Esophagus muscularis mucosa (tissue), 4 donors: ENCODE measurements at regions of chr3 and their contacts with region 1.

Region 1: DNA sequence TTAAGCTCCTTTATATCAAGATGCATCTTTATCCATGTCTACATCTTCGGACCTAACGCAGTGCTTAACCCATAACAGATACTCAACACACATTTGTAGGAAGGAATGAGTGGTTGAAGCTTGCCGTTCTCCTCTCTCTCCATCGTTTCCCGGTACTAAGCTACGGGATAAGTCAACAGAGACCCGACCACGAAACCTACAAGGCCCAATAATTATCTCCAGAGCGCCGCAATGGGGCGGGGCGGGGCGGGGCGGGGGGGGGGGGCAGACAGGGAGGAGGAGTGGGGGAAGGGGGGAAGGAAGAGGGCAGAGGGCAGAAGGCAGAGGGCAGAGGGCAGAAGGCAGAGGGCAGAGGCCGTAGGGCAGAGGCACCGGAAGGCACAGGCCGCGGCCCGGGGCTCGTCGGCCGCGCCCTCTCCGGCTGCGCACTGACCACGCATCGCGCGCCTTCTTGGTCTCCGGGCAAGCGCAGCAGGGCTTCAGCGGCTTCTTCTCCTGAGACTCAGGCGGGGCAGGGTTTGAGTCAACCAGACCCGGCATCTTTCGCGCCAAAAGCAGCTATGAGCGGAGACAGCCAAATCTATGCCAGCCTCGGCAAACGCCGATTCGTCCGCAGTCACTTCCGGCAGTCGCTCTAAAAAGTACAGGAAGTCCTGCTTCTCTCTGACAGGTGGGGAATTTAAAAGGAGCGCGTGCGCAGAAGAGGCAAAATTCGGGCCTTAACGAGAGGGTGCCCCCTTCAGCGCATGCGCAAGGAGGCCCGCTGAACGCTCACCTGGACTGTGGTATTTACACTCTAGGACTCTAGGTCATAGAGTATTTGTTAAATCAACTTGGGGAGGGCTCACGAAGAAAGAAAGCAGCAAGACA is at the start of gene COX17:
- DNase-seq: peak; percentile 98
- H3K4me3 ChIP-seq: peak within 1 kb of the TSS; percentile 72 to 89 (median 76)
- H3K27ac ChIP-seq: peak within 1 kb of the TSS; percentile 92 to 97 (median 95)
- H3K4me1 ChIP-seq: peaks cover 18 to 35% (median 23%) of the 10 kb centered on the region in 4 donors
- H3K27me3 ChIP-seq: no peaks in the 10 kb centered on the region
- CTCF ChIP-seq: no peak
- EP300 ChIP-seq: no peak
- POLR2A ChIP-seq: peak; percentile 75
- total RNA-seq, gene COX17: 36.3 to 76.4 (median 61.6) TPM

Region 2: GRCh38 chr3:119463171-119464169 is 213.5 kb before region 1 on chr3 and contains the start of gene TMEM39A:
- intact Hi-C with region 1: loop called (anchors 5 kb)
- DNase-seq: peak; percentile 100
- H3K4me3 ChIP-seq: peak within 1 kb of the TSS; percentile 69 to 98 (median 80)
- H3K27ac ChIP-seq: peak within 1 kb of the TSS; percentile 80 to 87 (median 84)
- H3K4me1 ChIP-seq: peaks cover 25 to 50% (median 40%) of the 10 kb centered on the region in 4 donors
- H3K27me3 ChIP-seq: no peaks in the 10 kb centered on the region
- CTCF ChIP-seq: peak in 2 of 3 experiments; percentile 20 to 25
- EP300 ChIP-seq: no peak
- POLR2A ChIP-seq: peak; percentile 77
- total RNA-seq, gene TMEM39A: 10.0 to 34.3 (median 25.9) TPM

Region 3: DNA sequence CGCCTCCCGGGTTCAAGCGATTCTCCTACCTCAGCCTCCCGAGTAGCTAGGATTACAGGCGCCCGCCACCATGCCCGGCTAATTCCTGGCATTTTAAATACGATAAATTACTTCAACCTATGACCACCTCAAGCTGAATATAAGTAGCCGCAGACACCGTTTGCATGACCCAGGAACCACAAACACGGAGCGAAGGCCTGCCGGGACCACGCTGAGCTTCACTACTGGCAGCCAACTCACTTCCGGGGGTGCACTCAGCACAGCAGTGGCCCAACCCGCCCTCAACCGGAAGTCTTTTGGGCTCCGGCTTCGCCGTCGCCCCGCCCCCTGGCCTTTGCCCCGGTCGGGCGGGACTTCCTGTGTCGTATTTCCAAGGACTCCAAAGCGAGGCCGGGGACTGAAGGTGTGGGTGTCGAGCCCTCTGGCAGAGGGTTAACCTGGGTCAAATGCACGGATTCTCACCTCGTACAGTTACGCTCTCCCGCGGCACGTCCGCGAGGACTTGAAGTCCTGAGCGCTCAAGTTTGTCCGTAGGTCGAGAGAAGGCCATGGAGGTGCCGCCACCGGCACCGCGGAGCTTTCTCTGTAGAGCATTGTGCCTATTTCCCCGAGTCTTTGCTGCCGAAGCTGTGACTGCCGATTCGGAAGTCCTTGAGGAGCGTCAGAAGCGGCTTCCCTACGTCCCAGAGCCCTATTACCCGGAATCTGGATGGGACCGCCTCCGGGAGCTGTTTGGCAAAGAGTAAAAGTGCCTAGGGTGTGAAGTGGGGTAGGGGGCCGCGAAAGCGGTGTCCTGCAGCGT is 178.6 kb before region 1 on chr3 and contains the start of gene TIMMDC1:
- intact Hi-C with region 1: loop called (anchors 10 kb)
- DNase-seq: peak; percentile 99
- H3K4me3 ChIP-seq: peak within 1 kb of the TSS; percentile 67 to 86 (median 71)
- H3K27ac ChIP-seq: peak within 1 kb of the TSS; percentile 82 to 93 (median 90)
- H3K4me1 ChIP-seq: peaks cover 27 to 46% (median 44%) of the 10 kb centered on the region in 4 donors
- H3K27me3 ChIP-seq: no peaks in the 10 kb centered on the region
- CTCF ChIP-seq: no peak
- EP300 ChIP-seq: no peak
- POLR2A ChIP-seq: peak; percentile 17
- total RNA-seq, gene TIMMDC1: 45.7 to 63.9 (median 54.7) TPM

Region 4: DNA sequence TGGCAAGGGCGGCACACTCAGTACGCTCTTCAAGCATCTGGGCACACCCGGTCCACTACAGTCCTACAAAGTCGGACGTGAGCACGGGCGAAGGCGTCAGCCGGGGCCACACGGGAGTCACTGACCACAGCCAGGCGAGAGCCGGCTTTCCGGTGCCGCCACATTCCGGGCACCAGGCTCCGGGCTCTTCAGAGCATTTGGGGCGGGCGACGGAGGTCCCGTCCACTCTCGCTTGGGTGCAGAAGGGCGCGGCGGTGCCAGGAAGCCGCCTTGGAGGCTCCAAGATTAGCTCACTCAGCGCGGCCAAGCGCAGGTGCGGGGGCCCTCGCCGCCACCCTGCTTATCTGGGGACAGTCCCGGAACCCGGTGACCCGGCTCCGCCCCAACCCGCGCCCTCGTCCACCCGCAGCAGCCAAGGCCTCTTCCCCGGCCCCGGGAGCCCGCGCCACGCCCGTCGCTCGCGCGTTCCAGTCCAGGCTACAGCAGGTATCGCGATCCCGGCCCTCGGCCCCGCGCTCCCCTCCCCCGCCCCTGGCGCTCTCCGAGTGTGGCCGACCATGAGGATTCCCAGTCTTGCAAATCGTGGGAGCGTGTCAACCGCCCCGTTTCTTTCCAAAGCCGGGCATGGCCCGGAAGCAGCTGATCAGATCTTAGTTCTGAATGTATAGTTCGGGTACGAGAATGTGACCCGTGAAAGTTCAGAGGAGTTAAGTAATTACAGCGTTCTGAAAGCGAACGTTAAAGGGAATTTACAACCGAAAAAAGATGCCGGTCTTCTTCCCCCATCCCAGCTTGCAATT is 97.4 kb before region 1 on chr3 and contains the start of gene ADPRH:
- intact Hi-C with region 1: loop called (anchors 5 kb)
- DNase-seq: peak; percentile 93
- H3K4me3 ChIP-seq: peak within 1 kb of the TSS; percentile 64 to 75 (median 68)
- H3K27ac ChIP-seq: peak within 1 kb of the TSS; percentile 88 to 95 (median 90)
- H3K4me1 ChIP-seq: peaks cover 9 to 24% (median 20%) of the 10 kb centered on the region in 4 donors
- H3K27me3 ChIP-seq: no peaks in the 10 kb centered on the region
- CTCF ChIP-seq: no peak
- EP300 ChIP-seq: no peak
- POLR2A ChIP-seq: no peak
- total RNA-seq, gene ADPRH: 10.4 to 17.8 (median 14.1) TPM